Sciatic nerve (tissue), 2 donors: ENCODE measurements at regions of chr20 and their contacts with region 1.

Region 1: DNA sequence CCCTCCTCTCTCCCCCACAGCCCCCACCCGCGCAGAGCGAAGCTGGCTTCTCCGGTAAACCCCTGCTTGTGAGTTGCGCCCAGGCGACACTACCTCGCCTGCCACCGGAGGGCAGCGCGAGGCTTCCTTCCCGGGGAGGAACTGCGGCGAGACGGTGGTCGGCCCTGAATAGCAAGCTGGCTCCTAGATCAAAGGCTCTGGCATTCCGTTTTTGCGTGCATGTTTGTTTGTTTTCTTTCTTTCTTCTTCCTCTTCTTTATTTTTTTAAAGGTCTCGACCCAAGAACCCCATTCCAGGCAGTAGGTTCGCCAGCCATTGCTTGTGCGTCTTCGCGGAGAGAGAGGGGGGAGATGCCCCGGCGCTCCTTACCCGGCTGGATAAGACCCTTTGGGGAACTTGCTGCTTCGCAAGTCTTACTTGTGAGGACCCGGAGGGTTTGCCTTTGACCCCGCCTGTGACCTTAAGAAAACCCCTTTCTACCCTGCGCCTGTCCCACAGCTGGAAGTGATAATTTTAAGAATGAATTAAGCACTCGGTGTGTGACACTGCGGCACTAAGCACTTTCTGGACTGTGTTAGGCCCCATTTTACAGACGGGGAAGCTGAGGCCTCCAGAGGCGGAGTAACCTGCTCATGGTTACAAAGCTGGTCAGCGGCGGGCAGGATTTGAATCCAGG is 92.7 kb upstream of the SIRPA start:
- DNase-seq: peak; percentile 83
- ATAC-seq: peak; percentile 88

Region 2: DNA sequence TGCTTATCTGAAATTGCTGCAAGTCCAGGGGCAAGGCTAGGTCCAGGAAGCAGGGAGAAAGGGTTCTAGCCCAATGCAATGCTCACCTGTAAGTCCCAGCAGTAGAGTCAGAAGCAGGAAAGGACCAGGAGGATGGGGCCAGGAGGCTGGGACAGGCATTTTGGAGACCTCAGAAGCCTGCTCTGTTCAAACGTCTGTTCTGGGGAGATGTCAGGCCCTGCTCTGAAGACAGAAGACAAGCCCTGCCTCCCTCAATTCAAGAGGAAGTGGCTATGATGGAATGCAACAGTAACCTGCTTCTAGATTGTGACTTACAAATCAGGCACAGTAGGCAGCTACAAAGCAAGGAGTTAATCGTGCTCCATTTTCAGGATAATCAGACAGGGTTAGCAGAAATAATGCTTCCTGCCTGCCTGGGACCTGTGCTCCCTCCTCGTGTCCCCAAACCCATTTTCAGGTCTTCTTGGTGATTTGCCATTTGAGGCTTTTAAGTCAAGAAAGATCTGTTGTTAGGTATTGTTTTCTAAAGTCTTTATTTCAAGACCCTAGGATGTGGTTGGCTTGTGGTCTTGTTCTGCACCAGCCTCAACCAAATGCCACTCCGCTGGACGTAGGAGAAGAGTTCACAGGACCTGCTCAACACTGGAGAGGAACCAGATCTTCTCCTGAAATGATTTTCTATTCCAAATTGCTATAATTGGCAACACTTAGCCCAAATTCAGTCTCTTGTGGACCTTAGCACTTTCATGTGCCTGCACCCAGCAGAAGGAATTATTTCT is 144.8 kb before region 1 on chr20 and contains the start of gene SIRPG:
- intact Hi-C with region 1: no loop called
- DNase-seq: no peak
- ATAC-seq: no peak
- total RNA-seq, gene SIRPG: not detected

Region 3: GRCh38 chr20:1894951-1895673 is 92.6 kb after region 1 on chr20 and contains the start of gene SIRPA:
- intact Hi-C with region 1: loop called (anchors 5 kb)
- DNase-seq: peak; percentile 84
- ATAC-seq: peak; percentile 40
- total RNA-seq, gene SIRPA: 55.5 TPM

Region 4: DNA sequence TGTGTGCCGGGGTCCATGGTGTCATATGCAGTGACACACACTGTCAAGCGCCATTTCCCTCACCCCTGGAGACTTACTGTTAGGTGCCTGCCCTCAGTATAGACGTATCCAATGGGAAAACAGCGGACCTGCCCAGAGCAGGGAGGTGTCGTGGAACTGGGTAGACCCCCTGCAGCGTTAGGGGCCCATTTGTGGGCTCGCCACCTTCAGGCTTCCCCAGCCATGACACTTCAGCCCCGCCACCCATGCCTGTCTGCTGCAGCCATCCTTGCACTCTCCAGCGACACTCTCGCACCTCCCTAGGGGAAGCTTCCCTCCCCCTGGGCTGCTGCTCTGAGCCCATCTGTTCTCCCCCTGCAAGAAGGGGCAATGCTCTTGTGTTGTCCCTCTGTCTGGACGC is 342.3 kb after region 1 on chr20:
- intact Hi-C with region 1: loop called (anchors 1 kb)
- DNase-seq: no peak
- ATAC-seq: no peak